Transverse colon (tissue), 4 donors: ENCODE measurements at regions of chr2 and their contacts with region 1.

Region 1: DNA sequence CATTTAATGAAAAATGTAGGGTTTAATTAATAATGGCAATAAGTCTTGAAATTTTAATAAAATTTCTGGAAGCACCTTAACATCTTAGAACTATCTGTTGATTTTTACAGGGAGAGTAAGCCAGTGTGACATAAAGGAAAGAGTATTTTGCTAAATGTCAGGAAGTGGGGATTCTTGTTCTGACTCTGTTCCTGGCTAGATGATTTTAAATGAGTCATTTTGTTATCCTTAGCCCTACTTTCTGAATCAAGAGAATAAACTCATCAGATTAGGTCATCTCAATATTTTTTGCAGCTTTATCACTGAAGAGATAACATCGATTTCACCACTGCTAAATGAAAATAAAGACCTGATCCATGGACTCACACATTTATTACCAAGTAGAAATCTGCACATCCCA is 377.5 kb upstream of the CYRIA start:
- DNase-seq: no peak
- H3K4me3 ChIP-seq: no peak overlapping the region
- H3K27ac ChIP-seq: no peak overlapping the region
- H3K4me1 ChIP-seq: no peaks in the 10 kb centered on the region
- H3K27me3 ChIP-seq: no peaks in the 10 kb centered on the region
- CTCF ChIP-seq: no peak
- EP300 ChIP-seq: no peak
- POLR2A ChIP-seq: no peak

Region 2: GRCh38 chr2:16142383-16143361 is 900.5 kb before region 1 on chr2:
- in situ Hi-C with region 1: no loop called
- intact Hi-C with region 1: loop called (anchors 5 kb)
- DNase-seq: no peak
- H3K4me3 ChIP-seq: no peak overlapping the region
- H3K27ac ChIP-seq: no peak overlapping the region
- H3K4me1 ChIP-seq: peaks cover 0 to 4% (median 0%) of the 10 kb centered on the region in 4 donors
- H3K27me3 ChIP-seq: no peaks in the 10 kb centered on the region
- CTCF ChIP-seq: no peak
- EP300 ChIP-seq: no peak
- POLR2A ChIP-seq: no peak